Mammary epithelial cell (primary cell): ENCODE measurements at regions of chr16 and their contacts with region 1.

Region 1: DNA sequence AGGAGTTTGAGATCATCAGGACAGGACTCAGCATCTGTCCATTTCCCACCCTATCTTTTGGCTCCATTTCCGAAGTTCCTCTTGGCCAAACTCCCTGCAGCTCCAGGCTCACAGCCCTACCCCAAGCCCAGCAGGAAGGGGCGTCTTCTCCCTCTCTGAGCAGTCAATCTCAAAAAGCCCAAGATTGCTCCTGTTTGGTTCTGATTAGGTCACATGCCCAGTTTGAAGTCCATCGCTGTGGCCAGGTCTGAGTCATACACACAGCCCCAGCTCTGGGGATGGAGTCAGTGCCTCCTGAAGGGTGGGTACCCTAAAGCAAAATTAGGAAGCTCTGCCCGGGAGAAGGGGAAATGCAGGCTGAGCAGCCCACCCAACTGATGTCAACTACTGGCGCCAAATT is 23.9 kb downstream of the SNX20 start:
- DNase-seq: no peak
- H3K4me3 ChIP-seq: no peak overlapping the region
- H3K27ac ChIP-seq: no peak overlapping the region
- H3K4me1 ChIP-seq: no peaks in the 10 kb centered on the region
- H3K27me3 ChIP-seq: no peaks in the 10 kb centered on the region
- CTCF ChIP-seq: no peak

Region 2: GRCh38 chr16:50559804-50560514 is 97.3 kb before region 1 on chr16:
- CTCF ChIA-PET with region 1: no interaction called
- dilution Hi-C with region 1: loop called (anchors 5 kb)
- in situ Hi-C with region 1: no loop called
- intact Hi-C with region 1: no loop called
- DNase-seq: no peak
- H3K4me3 ChIP-seq: no peak overlapping the region
- H3K27ac ChIP-seq: no peak overlapping the region
- H3K4me1 ChIP-seq: no peaks in the 10 kb centered on the region
- H3K27me3 ChIP-seq: no peaks in the 10 kb centered on the region
- CTCF ChIP-seq: no peak

Region 3: DNA sequence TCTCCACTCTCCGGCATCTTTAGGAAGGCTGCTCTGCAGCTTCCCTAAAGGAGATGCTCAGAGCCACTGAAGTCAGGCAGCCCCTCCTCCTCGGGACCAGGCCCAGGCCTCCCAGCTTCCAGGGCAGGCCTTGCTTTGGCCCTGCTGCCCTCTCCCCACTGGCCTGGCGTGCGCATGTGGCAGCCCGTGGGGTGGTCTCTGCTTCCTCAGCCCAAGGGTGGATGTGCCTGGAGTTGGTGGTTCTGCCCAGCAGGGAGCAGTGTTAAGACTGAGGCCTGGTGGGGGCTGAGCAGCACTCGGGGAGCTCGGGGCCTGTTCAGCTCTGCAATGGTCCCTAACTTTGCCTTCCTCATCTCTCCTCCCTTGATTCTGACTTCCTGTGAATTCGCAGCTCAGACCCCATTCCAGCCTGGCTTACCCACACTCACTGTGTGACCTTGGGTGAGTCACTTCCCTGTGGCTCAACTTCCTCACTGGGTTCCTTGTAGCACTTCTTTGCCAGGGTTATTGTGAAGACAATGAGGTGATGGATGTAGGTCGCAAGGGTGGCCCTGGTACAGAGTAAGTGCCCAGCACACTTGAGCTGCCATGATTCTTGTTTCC is 45.8 kb before region 1 on chr16:
- CTCF ChIA-PET with region 1: no interaction called
- dilution Hi-C with region 1: loop called (anchors 5 kb)
- in situ Hi-C with region 1: no loop called
- intact Hi-C with region 1: no loop called
- DNase-seq: peak; percentile 33
- H3K4me3 ChIP-seq: no peak overlapping the region
- H3K27ac ChIP-seq: no peak overlapping the region
- H3K4me1 ChIP-seq: no peaks in the 10 kb centered on the region
- H3K27me3 ChIP-seq: no peaks in the 10 kb centered on the region
- CTCF ChIP-seq: no peak